Esophagus squamous epithelium (tissue), 5 donors: ENCODE measurements at regions of chr2 and their contacts with region 1.

Region 1: DNA sequence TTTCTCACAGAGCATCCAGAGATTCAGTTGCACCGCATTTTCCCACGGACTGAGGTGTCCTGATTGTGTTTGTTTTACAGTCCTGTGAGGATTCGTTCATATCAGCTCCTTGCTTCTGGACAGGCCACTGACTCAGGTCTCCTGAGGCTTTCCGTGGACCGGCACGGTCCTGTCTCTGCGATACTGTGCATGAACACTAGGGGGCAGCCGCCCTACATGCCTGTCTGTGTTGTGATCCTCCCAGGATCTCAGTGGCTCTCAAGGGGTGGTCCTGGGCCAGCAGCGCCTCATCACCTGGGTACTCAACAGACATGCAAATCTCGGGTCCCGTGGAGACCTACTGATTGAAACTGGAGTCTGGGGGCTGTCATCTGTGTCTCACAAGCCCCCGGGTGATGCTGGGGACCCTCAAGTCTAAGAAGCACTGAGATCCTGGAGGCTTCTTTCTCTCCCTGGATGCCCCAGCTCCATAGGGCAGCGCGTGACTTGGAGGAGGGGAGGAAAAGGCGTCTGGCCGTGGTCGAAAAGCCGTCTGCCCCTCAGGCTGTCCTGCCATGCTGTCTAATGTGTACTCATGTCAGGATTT is 28.9 kb downstream of the IL1R2 start:
- DNase-seq: peak; percentile 16
- H3K4me3 ChIP-seq: no peak overlapping the region
- H3K27ac ChIP-seq: peak overlapping the region in 2 of 4 donors; percentile 45 to 55
- H3K4me1 ChIP-seq: peaks cover 0 to 44% (median 9%) of the 10 kb centered on the region in 3 donors
- H3K27me3 ChIP-seq: no peaks in the 10 kb centered on the region
- CTCF ChIP-seq: peak; percentile 94 to 99 (median 98)
- POLR2A ChIP-seq: no peak

Region 2: GRCh38 chr2:101306410-101306809 is 714.3 kb before region 1 on chr2:
- intact Hi-C with region 1: no loop called
- DNase-seq: no peak
- H3K4me3 ChIP-seq: peak overlapping the region; percentile 73 to 94 (median 82)
- H3K27ac ChIP-seq: peak overlapping the region; percentile 93 to 99 (median 96)
- H3K4me1 ChIP-seq: peaks cover 40 to 86% (median 56%) of the 10 kb centered on the region in 3 donors
- H3K27me3 ChIP-seq: no peaks in the 10 kb centered on the region
- CTCF ChIP-seq: no peak
- POLR2A ChIP-seq: no peak

Region 3: GRCh38 chr2:102166189-102166845 is 145.6 kb after region 1 on chr2:
- intact Hi-C with region 1: loop called (anchors 5 kb)
- DNase-seq: no peak
- H3K4me3 ChIP-seq: no peak overlapping the region
- H3K27ac ChIP-seq: peak overlapping the region in 2 of 4 donors; percentile 19 to 29
- H3K4me1 ChIP-seq: peaks cover 0 to 23% (median 0%) of the 10 kb centered on the region in 3 donors
- H3K27me3 ChIP-seq: no peaks in the 10 kb centered on the region
- CTCF ChIP-seq: peak; percentile 41 to 70 (median 62)
- POLR2A ChIP-seq: no peak

Region 4: DNA sequence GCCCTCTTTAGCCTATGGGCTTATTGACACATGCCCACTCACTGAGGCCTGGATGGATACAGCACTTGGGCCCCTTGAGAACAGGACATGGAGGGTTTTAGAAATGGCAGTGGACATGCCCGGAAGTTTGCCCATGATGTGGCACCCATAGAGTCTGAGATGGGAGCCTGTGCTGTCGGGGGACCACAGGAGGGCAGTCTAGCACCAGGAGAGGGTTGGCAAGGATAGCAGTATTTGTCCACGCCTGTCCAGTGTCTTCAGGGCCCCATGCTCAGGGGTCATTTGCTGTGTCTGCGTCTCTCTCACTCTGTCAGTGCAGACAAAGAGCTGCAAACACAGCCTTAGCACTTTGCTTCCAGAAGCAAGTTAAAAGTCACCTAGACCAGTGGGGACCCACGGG is 214.8 kb after region 1 on chr2:
- intact Hi-C with region 1: loop called (anchors 5 kb)
- DNase-seq: no peak
- H3K4me3 ChIP-seq: no peak overlapping the region
- H3K27ac ChIP-seq: no peak overlapping the region
- H3K4me1 ChIP-seq: peaks cover 0 to 9% (median 1%) of the 10 kb centered on the region in 3 donors
- H3K27me3 ChIP-seq: no peaks in the 10 kb centered on the region
- CTCF ChIP-seq: peak in 2 of 6 experiments; percentile 7 to 29
- POLR2A ChIP-seq: no peak

Region 5: GRCh38 chr2:102442967-102443828 is 422.5 kb after region 1 on chr2:
- intact Hi-C with region 1: loop called (anchors 10 kb)
- DNase-seq: no peak
- H3K4me3 ChIP-seq: no peak overlapping the region
- H3K27ac ChIP-seq: no peak overlapping the region
- H3K4me1 ChIP-seq: peaks cover 0 to 5% (median 0%) of the 10 kb centered on the region in 3 donors
- H3K27me3 ChIP-seq: no peaks in the 10 kb centered on the region
- CTCF ChIP-seq: peak; percentile 49 to 78 (median 72)
- POLR2A ChIP-seq: no peak